ENCODE measurements at regions of chr9 and their contacts with region 1.

Region 1: DNA sequence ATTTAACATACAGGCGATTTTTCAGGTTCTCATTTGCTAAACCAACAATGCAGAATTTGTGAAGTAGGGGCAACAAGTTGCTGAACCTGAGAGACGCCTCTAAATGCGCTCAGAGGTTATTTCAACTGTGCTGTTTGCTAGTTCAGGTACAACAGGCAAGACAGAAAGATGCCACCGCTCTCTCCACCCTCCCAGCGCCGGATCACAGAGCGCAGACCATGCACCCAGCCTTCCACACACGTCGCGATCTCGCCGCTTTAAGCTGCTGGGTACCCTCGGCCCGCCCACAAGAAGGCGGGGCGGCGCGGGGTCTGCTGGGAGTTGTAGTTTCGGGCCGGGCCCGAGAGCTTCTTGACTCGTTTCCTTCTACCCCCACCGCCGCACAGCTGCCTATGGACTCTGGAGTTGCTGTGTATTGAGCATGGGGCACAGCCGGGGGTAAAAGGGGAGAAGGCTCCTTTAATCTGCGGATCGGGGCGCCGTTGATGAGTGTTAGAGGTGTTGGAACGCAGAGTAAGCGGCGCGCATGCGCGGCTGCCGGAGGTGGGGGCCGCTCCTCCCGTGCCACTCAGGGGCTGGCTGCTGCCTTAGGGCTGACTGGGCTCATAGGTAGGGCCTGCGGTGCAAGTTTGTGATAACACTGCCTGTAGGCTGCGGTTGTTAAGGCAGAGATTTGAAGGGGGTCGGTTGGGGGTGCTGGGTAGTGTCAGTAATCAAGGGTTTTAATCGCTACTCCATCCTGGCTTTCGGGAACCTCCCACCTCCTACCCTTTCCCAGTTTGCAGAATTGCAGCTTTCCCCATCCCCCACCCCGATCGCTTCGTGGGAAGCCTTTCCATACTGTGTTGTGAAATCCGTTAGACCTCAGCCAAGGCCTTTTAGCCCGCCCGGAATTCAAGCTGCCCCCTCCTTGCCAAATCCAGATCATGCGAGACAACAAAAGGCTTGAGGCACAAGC is 40.3 kb upstream of the ABCA1 start:
- DNase-seq: peak; percentile 77 to 94
- ATAC-seq: peak; percentile 91 to 93
- H3K4me3 ChIP-seq: peak overlapping the region; percentile 80 to 97 (median 82)
- H3K27ac ChIP-seq: peak overlapping the region; percentile 94 to 99 (median 96)
- H3K4me1 ChIP-seq: peaks cover 21 to 25% of the 10 kb centered on the region in 2 donors
- H3K27me3 ChIP-seq: no peaks in the 10 kb centered on the region
- CTCF ChIP-seq: peak in 1 of 5 experiments; percentile 25
- POLR2A ChIP-seq: peak in 1 of 2 donors; percentile 54

Region 2: GRCh38 chr9:104934691-104935500 is 33.4 kb before region 1 on chr9:
- in situ Hi-C with region 1: loop called in 1 of 4 experiments (anchors 5 kb)
- intact Hi-C with region 1: no loop called
- DNase-seq: no peak
- ATAC-seq: peak in 1 of 2 donors; percentile 27
- H3K4me3 ChIP-seq: no peak overlapping the region
- H3K27ac ChIP-seq: peak overlapping the region in 1 of 4 donors; percentile 45
- H3K4me1 ChIP-seq: no peaks in the 10 kb centered on the region
- H3K27me3 ChIP-seq: no peaks in the 10 kb centered on the region
- CTCF ChIP-seq: no peak
- POLR2A ChIP-seq: no peak

Region 3: DNA sequence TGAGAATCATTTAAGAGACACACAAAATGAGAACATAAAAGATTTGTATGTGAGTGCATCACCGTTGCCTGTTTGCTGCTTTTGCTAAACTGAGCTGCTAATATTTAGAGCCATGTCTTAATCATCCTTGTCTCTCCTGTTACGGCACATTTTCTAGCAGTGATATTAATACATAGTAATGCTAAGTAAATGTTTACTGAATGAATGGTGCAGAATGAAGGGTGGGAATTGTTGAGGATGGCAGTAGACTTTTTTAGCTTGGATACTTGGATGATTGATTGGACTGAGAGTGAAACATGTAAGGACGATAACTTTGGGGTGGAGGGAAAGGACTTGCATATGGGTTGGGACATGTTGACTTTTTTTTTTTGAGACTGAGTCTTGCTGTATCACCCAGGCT is 62.0 kb after region 1 on chr9:
- in situ Hi-C with region 1: no loop called
- intact Hi-C with region 1: no loop called
- DNase-seq: no peak
- ATAC-seq: no peak
- H3K4me3 ChIP-seq: no peak overlapping the region
- H3K27ac ChIP-seq: no peak overlapping the region
- H3K4me1 ChIP-seq: no peaks in the 10 kb centered on the region
- H3K27me3 ChIP-seq: no peaks in the 10 kb centered on the region
- CTCF ChIP-seq: no peak
- POLR2A ChIP-seq: no peak

Region 4: GRCh38 chr9:105157130-105157583 is 188.9 kb after region 1 on chr9:
- in situ Hi-C with region 1: no loop called
- intact Hi-C with region 1: loop called (anchors 2 kb)
- DNase-seq: peak; percentile 14 to 57
- ATAC-seq: peak; percentile 96 to 98
- H3K4me3 ChIP-seq: no peak overlapping the region
- H3K27ac ChIP-seq: no peak overlapping the region
- H3K4me1 ChIP-seq: peaks cover 3 to 5% of the 10 kb centered on the region in 2 donors
- H3K27me3 ChIP-seq: no peaks in the 10 kb centered on the region
- CTCF ChIP-seq: peak in 4 of 5 experiments; percentile 38 to 60 (median 58)
- POLR2A ChIP-seq: no peak